A673 (cell line): ENCODE measurements at regions of chr7 and their contacts with region 1.

Region 1: GRCh38 chr7:27662490-27663205 is at the start of gene HIBADH:
- DNase-seq: peak; percentile 99
- H3K4me3 ChIP-seq: peak within 1 kb of the TSS; percentile 84
- H3K27ac ChIP-seq: peak within 1 kb of the TSS; percentile 89
- H3K4me1 ChIP-seq: no peaks in the 10 kb centered on the region
- H3K27me3 ChIP-seq: no peaks in the 10 kb centered on the region
- CTCF ChIP-seq: no peak
- total RNA-seq, gene HIBADH: 10.2 and 17.1 TPM in 2 replicates

Region 2: DNA sequence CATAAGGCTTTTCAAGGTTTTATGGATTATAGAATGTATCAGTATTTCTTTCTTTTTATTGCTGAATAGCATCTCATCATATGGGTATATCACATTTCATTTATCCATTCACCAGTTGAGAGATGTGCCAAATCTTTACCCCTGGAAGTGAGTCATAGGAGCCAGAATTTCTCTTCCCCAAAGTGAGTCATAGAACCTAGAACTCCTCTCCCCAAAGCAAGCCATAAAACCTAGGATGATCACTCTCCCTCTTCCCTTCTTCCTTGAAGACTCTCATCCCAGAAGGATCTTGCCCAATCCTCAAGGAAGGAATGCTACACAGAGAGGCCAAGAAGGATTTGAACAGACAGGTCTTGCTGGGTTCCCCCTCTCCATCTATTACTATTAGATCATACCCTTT is 220.2 kb before region 1 on chr7:
- CTCF ChIA-PET with region 1: no interaction called
- POLR2A ChIA-PET with region 1: no interaction called
- intact Hi-C with region 1: no loop called
- DNase-seq: peak; percentile 5
- H3K4me3 ChIP-seq: no peak overlapping the region
- H3K27ac ChIP-seq: no peak overlapping the region
- H3K4me1 ChIP-seq: no peaks in the 10 kb centered on the region
- H3K27me3 ChIP-seq: peaks cover 31% of the 10 kb centered on the region
- CTCF ChIP-seq: no peak

Region 3: GRCh38 chr7:27739909-27740448 is 77.3 kb after region 1 on chr7 and contains the start of gene TAX1BP1:
- CTCF ChIA-PET with region 1: no interaction called
- POLR2A ChIA-PET with region 1: no interaction called
- intact Hi-C with region 1: loop called (anchors 5 kb)
- DNase-seq: peak; percentile 95
- H3K4me3 ChIP-seq: peak within 1 kb of the TSS; percentile 92
- H3K27ac ChIP-seq: peak within 1 kb of the TSS; percentile 91
- H3K4me1 ChIP-seq: peaks cover 6% of the 10 kb centered on the region
- H3K27me3 ChIP-seq: no peaks in the 10 kb centered on the region
- CTCF ChIP-seq: no peak
- total RNA-seq, gene TAX1BP1: 54.0 and 59.7 TPM in 2 replicates

Region 4: DNA sequence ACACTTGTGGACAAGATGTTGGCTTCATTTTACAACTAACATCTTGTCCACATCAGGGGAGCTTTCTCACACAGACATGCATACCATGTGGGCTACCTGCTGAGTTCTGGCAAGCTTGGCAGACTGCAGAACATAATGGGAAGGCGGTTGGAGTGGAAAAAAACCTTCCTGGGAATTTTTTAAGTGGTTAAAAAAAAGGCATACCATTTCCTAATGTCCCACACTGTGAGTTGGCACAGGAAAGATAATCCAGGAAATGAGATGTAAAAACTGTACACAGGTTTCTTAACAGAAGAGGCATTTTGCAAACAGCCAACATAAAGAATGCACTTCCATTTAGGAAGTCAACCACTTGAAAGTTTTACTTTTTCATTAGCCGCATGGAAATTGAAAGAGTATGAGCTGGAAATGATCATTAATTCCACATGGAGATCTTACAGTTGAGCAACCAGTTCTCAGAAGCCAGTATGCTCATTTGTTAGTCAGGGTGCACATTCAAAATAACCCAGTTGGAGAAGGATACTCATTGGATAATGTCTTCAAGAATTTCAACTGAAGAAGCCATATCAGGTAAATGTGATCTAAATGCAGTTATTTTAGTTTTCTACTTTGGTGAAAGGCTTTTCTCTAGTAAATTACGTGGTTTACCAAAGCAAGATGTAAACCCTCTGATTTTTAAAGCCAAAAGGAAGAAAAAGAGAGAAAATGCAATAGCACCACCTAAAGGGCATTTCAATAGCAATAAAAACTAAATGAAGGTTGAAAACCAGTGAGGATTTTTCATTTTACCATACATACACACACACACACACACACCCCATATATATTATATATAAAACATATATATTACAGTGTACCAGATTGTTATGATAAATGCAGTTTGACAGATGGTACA is 271.3 kb after region 1 on chr7:
- CTCF ChIA-PET with region 1: no interaction called
- POLR2A ChIA-PET with region 1: no interaction called
- intact Hi-C with region 1: no loop called
- DNase-seq: peak; percentile 94
- H3K4me3 ChIP-seq: no peak overlapping the region
- H3K27ac ChIP-seq: no peak overlapping the region
- H3K4me1 ChIP-seq: peaks cover 8% of the 10 kb centered on the region
- H3K27me3 ChIP-seq: peaks cover 90% of the 10 kb centered on the region
- CTCF ChIP-seq: peak; percentile 58